Endothelial cell of umbilical vein (primary cell): ENCODE measurements at regions of chr1 and their contacts with region 1.

Region 1: GRCh38 chr1:205631727-205632373 is at the start of gene ELK4:
- DNase-seq: peak; percentile 98
- H3K4me3 ChIP-seq: peak within 1 kb of the TSS; percentile 88 to 97 (median 92)
- H3K27ac ChIP-seq: peak within 1 kb of the TSS; percentile 82
- H3K4me1 ChIP-seq: peaks cover 29% of the 10 kb centered on the region
- H3K27me3 ChIP-seq: no peaks in the 10 kb centered on the region
- CTCF ChIP-seq: peak; percentile 72 to 90
- POLR2A ChIP-seq: peak; percentile 88
- total RNA-seq, gene ELK4: 78.7 and 107 TPM in 2 replicates

Region 2: DNA sequence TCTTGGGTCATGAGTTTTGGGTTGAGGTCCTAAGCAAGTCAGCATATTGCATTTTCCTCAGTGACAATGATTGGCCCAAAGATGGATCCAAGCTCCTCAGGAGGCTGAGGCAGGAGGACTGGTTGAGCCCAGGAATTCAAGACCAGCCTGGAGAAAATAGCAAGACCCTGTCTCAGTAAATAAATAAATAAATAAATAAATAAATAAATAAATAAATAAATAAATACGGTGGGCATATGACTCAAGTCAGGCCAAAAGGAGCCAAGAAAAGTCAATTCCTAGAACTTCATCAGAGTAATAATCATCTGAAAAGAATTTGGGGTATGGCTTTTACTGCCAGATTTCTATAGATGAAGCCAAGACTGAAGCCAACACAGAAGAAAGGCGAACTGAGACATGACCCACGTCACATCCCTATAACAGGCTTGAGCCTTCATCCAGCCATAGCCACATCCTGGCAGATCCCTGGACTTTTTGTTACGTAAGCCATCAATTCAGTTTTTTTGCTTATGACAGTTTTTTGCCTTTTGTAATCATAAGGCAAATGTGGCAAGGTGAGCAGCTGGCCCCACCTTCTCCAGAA is 849.6 kb before region 1 on chr1:
- CTCF ChIA-PET with region 1: no interaction called
- POLR2A ChIA-PET with region 1: no interaction called
- dilution Hi-C with region 1: no loop called
- intact Hi-C with region 1: no loop called
- DNase-seq: no peak
- H3K4me3 ChIP-seq: no peak overlapping the region
- H3K27ac ChIP-seq: no peak overlapping the region
- H3K4me1 ChIP-seq: no peaks in the 10 kb centered on the region
- H3K27me3 ChIP-seq: peaks cover 0 to 5% of the 10 kb centered on the region in 2 experiments
- CTCF ChIP-seq: no peak
- POLR2A ChIP-seq: no peak

Region 3: DNA sequence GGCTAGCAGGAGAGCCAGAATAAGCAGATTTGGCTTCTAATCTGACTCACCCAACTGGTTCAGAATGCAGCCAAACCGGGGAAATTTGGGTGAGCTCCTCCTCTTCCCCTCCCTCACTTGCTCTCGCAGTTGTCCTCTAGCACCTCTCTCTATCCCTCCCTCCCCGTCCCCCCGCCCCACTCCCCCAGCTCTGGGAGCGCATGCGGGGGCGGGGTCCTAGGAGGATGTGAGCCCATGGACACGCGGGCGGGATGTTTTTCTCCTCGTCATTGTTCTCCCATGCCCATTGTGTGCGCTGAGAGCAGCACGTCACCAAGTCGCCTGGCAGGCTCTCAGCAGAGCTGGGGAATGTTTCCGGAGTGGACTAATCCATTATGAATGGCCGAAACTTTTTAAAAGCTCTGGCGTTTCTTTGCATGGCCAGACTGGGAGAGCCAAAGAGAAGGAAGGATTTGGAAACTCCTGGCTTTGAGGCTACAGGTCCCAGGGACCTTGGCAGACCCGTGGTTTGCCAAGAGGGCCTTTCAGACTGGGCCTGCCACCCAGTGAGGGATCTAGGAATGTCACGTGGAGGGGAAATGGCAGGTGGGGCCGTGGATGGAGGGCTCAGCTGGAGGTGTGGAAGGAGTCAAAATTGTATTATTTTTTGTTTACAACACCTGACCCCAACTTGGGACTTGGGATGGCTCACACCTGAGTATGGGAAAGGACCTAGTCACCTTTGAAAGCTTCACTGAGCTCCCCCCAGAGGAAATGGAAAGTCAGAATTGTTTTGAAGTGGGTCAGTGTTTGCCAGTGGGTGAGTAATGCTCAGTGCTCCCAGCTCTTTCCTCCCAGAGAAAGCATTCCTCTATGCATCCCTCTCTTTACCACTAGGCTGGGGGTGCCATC is 88.2 kb before region 1 on chr1:
- CTCF ChIA-PET with region 1: interaction called, 4 read pairs
- POLR2A ChIA-PET with region 1: interaction called, 6 read pairs
- dilution Hi-C with region 1: no loop called
- intact Hi-C with region 1: loop called (anchors 1 kb)
- DNase-seq: peak; percentile 95
- H3K4me3 ChIP-seq: peak overlapping the region in 2 of 3 experiments; percentile 32 to 39
- H3K27ac ChIP-seq: peak overlapping the region; percentile 98
- H3K4me1 ChIP-seq: peaks cover 9% of the 10 kb centered on the region
- H3K27me3 ChIP-seq: peaks cover 2 to 5% of the 10 kb centered on the region in 2 experiments
- CTCF ChIP-seq: peak in 1 of 2 donors; percentile 5
- POLR2A ChIP-seq: no peak

Region 4: GRCh38 chr1:205584732-205585131 is 47.1 kb before region 1 on chr1:
- CTCF ChIA-PET with region 1: interaction called, 294 read pairs
- POLR2A ChIA-PET with region 1: interaction called, 3 read pairs
- dilution Hi-C with region 1: no loop called
- intact Hi-C with region 1: no loop called
- DNase-seq: no peak
- H3K4me3 ChIP-seq: no peak overlapping the region
- H3K27ac ChIP-seq: no peak overlapping the region
- H3K4me1 ChIP-seq: peaks cover 19% of the 10 kb centered on the region
- H3K27me3 ChIP-seq: no peaks in the 10 kb centered on the region
- CTCF ChIP-seq: peak; percentile 42 to 43
- POLR2A ChIP-seq: no peak

Region 5: GRCh38 chr1:205600085-205600484 is 31.8 kb before region 1 on chr1:
- CTCF ChIA-PET with region 1: interaction called, 57 read pairs
- POLR2A ChIA-PET with region 1: interaction called, 16 read pairs
- dilution Hi-C with region 1: no loop called
- intact Hi-C with region 1: loop called (anchors 1 kb)
- DNase-seq: peak; percentile 94
- H3K4me3 ChIP-seq: peak overlapping the region in 1 of 3 experiments; percentile 12
- H3K27ac ChIP-seq: peak overlapping the region; percentile 98
- H3K4me1 ChIP-seq: peaks cover 41% of the 10 kb centered on the region
- H3K27me3 ChIP-seq: no peaks in the 10 kb centered on the region
- CTCF ChIP-seq: peak; percentile 16 to 23
- POLR2A ChIP-seq: no peak

Region 6: DNA sequence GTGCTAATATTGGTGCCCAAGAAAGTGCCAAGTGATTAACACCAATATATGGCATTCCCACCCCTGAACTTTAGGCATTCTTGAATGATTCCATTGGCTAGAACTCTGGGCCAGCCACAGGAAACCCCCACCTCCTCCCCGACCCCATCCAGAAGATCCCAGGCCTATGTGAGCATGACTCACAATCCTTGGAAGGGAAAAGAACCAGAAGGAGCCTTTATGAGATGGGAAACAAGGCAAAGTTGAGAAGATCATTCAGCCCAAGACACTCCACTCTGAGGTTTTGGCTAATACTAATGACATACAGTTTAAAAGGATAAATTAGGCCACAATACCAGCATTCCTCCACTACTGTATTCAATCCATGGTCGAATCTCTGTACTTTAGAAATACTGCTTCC is 21.8 kb before region 1 on chr1:
- CTCF ChIA-PET with region 1: interaction called, 3 read pairs
- POLR2A ChIA-PET with region 1: no interaction called
- dilution Hi-C with region 1: no loop called
- intact Hi-C with region 1: loop called (anchors 2 kb)
- DNase-seq: peak; percentile 87
- H3K4me3 ChIP-seq: no peak overlapping the region
- H3K27ac ChIP-seq: peak overlapping the region; percentile 29
- H3K4me1 ChIP-seq: peaks cover 30% of the 10 kb centered on the region
- H3K27me3 ChIP-seq: no peaks in the 10 kb centered on the region
- CTCF ChIP-seq: no peak
- POLR2A ChIP-seq: no peak

Region 7: DNA sequence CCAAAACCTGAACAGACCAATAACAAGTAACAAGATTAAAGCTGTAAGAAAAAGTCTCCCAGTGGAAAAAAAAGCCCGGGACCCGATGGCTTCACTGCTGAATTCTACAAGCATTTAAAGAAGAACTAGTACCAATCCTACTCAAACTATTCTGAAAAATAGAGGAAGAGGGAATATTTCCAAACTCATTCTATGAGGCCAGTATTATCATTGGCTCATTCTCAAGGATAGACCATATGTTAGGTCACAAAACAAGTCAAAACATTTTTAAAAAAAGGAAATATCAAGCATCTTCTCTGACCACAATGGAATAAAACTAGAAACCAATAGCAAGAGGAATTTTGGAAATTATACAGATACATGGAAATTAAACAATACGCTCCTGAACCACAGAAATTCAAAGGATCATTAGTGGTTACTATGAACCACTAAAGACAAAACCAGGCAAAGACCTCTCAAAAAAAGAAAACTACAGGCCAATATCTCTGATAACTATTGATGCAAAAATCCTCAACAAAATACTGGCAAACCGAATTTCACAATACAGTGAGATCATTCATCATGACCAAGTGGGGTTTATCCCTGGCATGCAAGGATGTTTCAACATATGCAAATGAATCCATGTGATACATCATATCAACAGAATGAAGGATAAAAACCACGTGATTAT is 1219.6 kb after region 1 on chr1:
- CTCF ChIA-PET with region 1: no interaction called
- POLR2A ChIA-PET with region 1: no interaction called
- dilution Hi-C with region 1: no loop called
- intact Hi-C with region 1: no loop called
- DNase-seq: no peak
- H3K4me3 ChIP-seq: no peak overlapping the region
- H3K27ac ChIP-seq: no peak overlapping the region
- H3K4me1 ChIP-seq: no peaks in the 10 kb centered on the region
- H3K27me3 ChIP-seq: peaks cover 0 to 3% of the 10 kb centered on the region in 2 experiments
- CTCF ChIP-seq: no peak
- POLR2A ChIP-seq: no peak

Region 8: GRCh38 chr1:206935491-206936067 is 1303.7 kb after region 1 on chr1:
- CTCF ChIA-PET with region 1: no interaction called
- POLR2A ChIA-PET with region 1: no interaction called
- dilution Hi-C with region 1: no loop called
- intact Hi-C with region 1: no loop called
- DNase-seq: peak; percentile 25
- H3K4me3 ChIP-seq: no peak overlapping the region
- H3K27ac ChIP-seq: no peak overlapping the region
- H3K4me1 ChIP-seq: no peaks in the 10 kb centered on the region
- H3K27me3 ChIP-seq: no peaks in the 10 kb centered on the region
- CTCF ChIP-seq: peak; percentile 68 to 89
- POLR2A ChIP-seq: no peak